WTC11 (cell line): ENCODE measurements at regions of chr5 and their contacts with region 1.

Region 1: DNA sequence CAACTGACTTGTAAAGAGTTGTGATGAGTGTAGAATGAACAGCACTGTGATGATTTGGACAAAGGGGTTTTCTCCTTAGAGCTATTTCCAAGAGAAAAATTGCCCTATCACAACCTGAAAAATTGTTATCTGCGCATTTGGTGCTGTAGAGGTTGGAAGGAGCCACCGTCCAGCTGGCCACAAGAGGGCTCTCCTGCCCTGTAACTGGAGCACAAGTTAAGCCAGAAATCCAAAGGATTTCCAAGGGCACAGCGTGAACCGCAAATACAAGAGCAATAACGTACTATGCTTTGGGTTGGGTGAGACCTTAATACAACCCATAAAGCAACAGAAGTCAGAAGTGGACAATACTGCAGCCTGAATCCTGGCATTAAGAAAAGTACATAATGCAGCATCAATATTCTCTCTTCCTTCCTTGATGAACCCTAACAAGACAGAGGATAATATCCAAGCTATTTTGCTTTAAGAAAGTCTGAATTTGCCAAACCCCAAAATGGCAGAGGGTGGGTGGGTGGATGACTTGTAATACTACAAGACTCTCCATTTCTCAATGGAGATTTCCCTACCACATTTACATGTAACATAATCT is 56.8 kb upstream of the SMIM32 start:
- DNase-seq: peak; percentile 72
- ATAC-seq: peak; percentile 91
- H3K4me3 Mint-ChIP-seq: no peak overlapping the region
- H3K27ac Mint-ChIP-seq: no peak overlapping the region
- H3K4me1 Mint-ChIP-seq: peaks cover 5% of the 10 kb centered on the region
- H3K27me3 Mint-ChIP-seq: no peaks in the 10 kb centered on the region; the same call in none of the 2 replicates
- CTCF ChIP-seq: peak; percentile 73

Region 2: GRCh38 chr5:136769900-136770684 is 520.3 kb after region 1 on chr5:
- CTCF ChIA-PET with region 1: interaction called, 36 read pairs
- POLR2A ChIA-PET with region 1: no interaction called
- DNase-seq: peak; percentile 85
- ATAC-seq: peak; percentile 96
- H3K4me3 Mint-ChIP-seq: no peak overlapping the region
- H3K27ac Mint-ChIP-seq: no peak overlapping the region
- H3K4me1 Mint-ChIP-seq: peaks cover 18% of the 10 kb centered on the region
- H3K27me3 Mint-ChIP-seq: peaks cover 6% of the 10 kb centered on the region; the same call in 1 of the 2 replicates
- CTCF ChIP-seq: peak; percentile 77